ENCODE measurements at regions of chr5 and their contacts with region 1.

Region 1: DNA sequence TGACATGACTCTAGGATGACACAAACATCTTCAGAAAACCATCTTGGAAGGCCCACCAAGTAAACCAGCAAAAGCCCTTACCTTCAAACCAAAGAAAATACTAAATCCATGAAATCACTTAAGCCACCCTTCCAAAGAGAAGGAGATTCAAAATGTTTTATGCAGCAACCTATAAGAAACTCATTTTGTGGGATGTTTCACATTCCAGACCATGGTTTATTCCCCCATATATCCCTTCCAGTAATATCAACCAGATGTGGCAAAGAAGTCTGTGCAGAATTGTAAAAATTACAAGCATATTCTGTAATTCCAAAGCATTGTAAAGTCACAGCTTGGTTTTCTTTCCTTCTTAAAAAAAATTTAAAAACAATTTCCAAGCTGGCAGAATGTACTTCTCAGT is 117.4 kb downstream of the SLIT3 start:
- DNase-seq: no peak
- H3K4me3 ChIP-seq: no peak overlapping the region
- H3K27ac ChIP-seq: no peak overlapping the region
- H3K4me1 ChIP-seq: no peaks in the 10 kb centered on the region
- H3K27me3 ChIP-seq: no peaks in the 10 kb centered on the region
- CTCF ChIP-seq: no peak
- POLR2A ChIP-seq: no peak

Region 2: GRCh38 chr5:169213479-169213878 is 29.9 kb after region 1 on chr5:
- intact Hi-C with region 1: loop called (anchors 2 kb)
- DNase-seq: no peak
- H3K4me3 ChIP-seq: no peak overlapping the region
- H3K27ac ChIP-seq: no peak overlapping the region
- H3K4me1 ChIP-seq: peaks cover 0 to 4% of the 10 kb centered on the region in 2 donors
- H3K27me3 ChIP-seq: no peaks in the 10 kb centered on the region
- CTCF ChIP-seq: no peak
- POLR2A ChIP-seq: no peak

Measured in breast epithelium (tissue), 4 donors.